ENCODE measurements at regions of chr13 and their contacts with region 1.

Region 1: DNA sequence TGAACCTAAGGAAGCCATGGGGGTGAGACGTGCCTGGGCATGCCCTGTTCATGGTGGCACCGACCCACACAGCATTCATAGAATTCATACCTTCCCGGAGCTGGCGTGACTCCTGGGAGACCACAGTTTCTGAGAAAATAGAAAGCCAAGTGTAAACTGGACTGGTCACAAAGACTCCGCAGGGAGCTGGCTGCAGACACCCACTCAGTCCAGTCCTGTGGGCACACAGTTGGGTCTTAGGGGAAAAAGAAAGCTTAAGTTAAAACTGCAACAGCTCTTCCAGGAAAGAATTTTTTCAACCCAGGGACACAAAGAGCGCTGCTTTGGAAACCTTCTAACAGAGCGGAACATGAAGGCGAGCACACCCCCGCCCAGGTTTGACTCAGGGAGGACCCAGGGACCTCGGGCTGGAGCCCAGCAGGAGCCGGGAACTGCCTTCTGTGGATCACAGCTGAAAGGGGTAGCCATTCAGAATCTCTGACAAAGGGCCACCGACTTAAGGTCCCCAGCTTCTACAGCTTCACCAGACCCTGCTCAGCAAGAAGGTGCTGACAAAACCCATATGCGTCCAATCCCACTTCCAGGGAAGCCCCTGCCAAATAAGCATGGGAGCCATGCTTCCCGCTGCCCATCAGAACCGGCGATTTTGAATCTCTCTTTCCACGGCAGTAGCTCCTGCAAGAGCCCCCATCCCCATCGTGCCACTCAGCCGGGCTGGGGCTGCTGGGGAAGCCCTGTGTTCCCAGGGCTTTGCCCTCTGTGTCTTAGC is 183.7 kb downstream of the COL4A1 start:
- DNase-seq: no peak
- ATAC-seq: no peak
- H3K4me3 ChIP-seq: no peak overlapping the region
- H3K27ac ChIP-seq: peak overlapping the region; percentile 55 to 66; a peak in 4 of 6 replicates
- H3K4me1 ChIP-seq: peaks cover 49% of the 10 kb centered on the region
- CTCF ChIP-seq: no peak
- EP300 ChIP-seq: no peak
- POLR2A ChIP-seq: no peak
- RAD21 ChIP-seq: no peak

Region 2: DNA sequence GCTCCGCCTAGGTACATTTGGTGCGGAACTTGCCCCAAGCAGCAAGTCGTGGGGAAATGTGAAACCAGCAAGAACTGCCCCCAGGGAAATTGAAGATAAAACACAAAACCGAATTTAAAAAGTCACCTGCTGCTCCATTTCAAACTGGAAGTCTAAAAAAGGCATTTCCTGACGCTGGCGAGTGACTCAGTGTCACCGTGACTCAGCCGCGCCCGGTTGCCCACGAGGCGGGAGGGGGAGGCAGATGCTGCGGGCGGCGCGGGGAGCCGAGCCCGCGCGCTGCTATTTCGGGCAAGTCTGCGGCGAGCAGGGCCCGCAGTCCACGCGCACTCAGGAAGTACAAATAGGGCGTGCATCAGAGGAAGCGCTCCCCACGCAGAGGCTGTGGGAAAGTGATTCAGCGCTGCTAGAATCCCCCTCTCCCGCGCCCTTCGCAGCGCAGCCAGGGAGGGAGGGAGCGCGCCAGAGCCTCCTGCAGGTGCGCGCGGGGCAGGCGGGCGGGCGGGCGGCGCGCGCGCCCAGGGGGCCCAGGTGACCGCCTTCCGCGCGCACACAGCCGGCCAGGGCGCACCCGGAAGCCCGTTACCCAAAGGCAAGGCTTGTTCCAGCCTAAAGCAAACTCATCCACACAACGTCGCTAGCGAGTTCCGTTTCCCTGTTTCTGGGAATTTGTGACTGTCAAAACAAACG is 14.9 kb after region 1 on chr13:
- CTCF ChIA-PET with region 1: interaction called, 11 read pairs
- POLR2A ChIA-PET with region 1: no interaction called
- DNase-seq: peak; percentile 57 to 66
- ATAC-seq: peak; percentile 85 to 86
- H3K4me3 ChIP-seq: peak overlapping the region; percentile 64
- H3K27ac ChIP-seq: peak overlapping the region; percentile 84 to 91
- H3K4me1 ChIP-seq: peaks cover 7% of the 10 kb centered on the region; the same call in 1 of the 3 replicates
- CTCF ChIP-seq: no peak; the same call in 2 of the 3 replicates
- EP300 ChIP-seq: no peak
- POLR2A ChIP-seq: no peak
- RAD21 ChIP-seq: 0 out of 5 replicates have a peak, but pooled peaks of 1 of the 2 experiments have one; percentile 10

Region 3: DNA sequence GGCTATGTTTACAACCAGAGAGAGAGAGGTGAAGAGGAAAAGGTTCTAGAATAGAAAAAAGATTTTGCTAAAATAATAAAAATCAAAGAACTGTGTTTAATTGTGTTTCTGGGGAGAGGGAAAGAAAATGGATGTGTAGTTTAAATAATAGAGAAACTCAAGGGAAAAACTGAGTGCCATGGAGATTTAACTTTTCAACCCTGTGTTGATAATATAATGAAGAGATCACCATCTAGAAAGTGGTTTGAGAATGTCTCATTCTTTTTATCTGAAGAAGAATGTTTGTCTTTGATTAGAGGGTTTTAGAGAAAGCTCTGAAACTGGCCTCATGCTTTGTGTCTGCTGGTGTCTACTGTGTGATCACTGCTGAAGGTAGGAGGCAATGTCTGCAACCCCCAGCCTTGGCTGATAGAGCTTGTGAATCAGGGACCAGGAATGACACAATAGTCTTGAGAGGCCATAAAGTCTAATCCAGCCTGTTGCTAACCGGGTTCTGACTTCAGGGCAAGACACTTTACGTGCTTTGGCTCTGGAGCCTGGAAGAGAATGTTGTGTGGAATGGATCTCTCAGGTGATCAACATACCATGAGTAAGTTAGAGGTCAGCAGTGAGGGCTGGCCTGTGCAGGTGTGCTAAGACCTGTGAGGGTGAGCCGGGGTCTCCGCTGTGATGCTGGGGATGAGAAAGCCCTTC is 189.3 kb after region 1 on chr13:
- CTCF ChIA-PET with region 1: no interaction called
- POLR2A ChIA-PET with region 1: no interaction called
- DNase-seq: peak in 1 of 2 experiments; percentile 27
- ATAC-seq: peak in 1 of 2 experiments; percentile 53; a peak in 3 of 6 replicates
- H3K4me3 ChIP-seq: no peak overlapping the region
- H3K27ac ChIP-seq: peak overlapping the region; percentile 50 to 76; a peak in 3 of 6 replicates
- H3K4me1 ChIP-seq: peaks cover 46% of the 10 kb centered on the region
- CTCF ChIP-seq: no peak
- EP300 ChIP-seq: no peak
- POLR2A ChIP-seq: no peak
- RAD21 ChIP-seq: no peak

Measured in A549 (cell line).